WTC11 (cell line): ENCODE measurements at regions of chr6 and their contacts with region 1.

Region 1: GRCh38 chr6:110815217-110816109 is at the start of gene CDK19:
- DNase-seq: peak; percentile 98
- ATAC-seq: peak; percentile 84
- H3K4me3 Mint-ChIP-seq: peak within 1 kb of the TSS; percentile 97
- H3K27ac Mint-ChIP-seq: peak within 1 kb of the TSS; percentile 99
- H3K4me1 Mint-ChIP-seq: peaks cover 20% of the 10 kb centered on the region
- H3K27me3 Mint-ChIP-seq: no peaks in the 10 kb centered on the region
- CTCF ChIP-seq: no peak
- total RNA-seq, gene CDK19: 10.6 to 11.7 TPM (median 10.7 TPM) in 3 replicates

Region 2: DNA sequence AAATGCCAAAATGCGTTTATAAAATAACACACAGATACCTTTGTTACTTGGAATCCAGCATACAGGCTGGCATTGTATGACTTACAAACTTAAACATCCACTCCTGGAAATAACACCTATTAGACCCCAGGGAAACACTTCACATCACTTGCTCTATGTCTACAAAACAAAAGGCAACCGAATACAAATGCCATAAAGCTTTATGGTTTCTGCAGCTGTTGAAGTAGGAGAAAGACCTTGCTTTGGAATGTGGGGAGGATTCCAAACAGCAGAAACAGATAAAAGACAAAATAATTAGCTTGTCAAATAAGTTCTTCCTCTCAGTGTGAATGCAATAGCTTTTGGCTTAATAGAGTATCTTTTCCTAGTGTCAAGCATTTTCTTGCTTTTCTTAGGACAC is 49.4 kb after region 1 on chr6:
- CTCF ChIA-PET with region 1: no interaction called
- POLR2A ChIA-PET with region 1: interaction called, 12 read pairs
- DNase-seq: no peak
- ATAC-seq: no peak
- H3K4me3 Mint-ChIP-seq: no peak overlapping the region
- H3K27ac Mint-ChIP-seq: no peak overlapping the region
- H3K4me1 Mint-ChIP-seq: peaks cover 11% of the 10 kb centered on the region
- H3K27me3 Mint-ChIP-seq: no peaks in the 10 kb centered on the region; the same call in 1 of the 2 replicates
- CTCF ChIP-seq: no peak

Region 3: GRCh38 chr6:110958329-110959192 is 143.1 kb after region 1 on chr6 and contains the start of gene GTF3C6:
- CTCF ChIA-PET with region 1: no interaction called
- POLR2A ChIA-PET with region 1: interaction called, 12 read pairs
- DNase-seq: peak; percentile 91
- ATAC-seq: peak; percentile 98
- H3K4me3 Mint-ChIP-seq: peak within 1 kb of the TSS; percentile 96
- H3K27ac Mint-ChIP-seq: peak within 1 kb of the TSS; percentile 99
- H3K4me1 Mint-ChIP-seq: peaks cover 6% of the 10 kb centered on the region
- H3K27me3 Mint-ChIP-seq: no peaks in the 10 kb centered on the region
- CTCF ChIP-seq: no peak
- total RNA-seq, gene GTF3C6: 65.5 to 69.0 TPM (median 67.0 TPM) in 3 replicates